Dorsolateral prefrontal cortex (tissue), 120 donors: ENCODE measurements at regions of chr7 and their contacts with region 1.

Region 1: DNA sequence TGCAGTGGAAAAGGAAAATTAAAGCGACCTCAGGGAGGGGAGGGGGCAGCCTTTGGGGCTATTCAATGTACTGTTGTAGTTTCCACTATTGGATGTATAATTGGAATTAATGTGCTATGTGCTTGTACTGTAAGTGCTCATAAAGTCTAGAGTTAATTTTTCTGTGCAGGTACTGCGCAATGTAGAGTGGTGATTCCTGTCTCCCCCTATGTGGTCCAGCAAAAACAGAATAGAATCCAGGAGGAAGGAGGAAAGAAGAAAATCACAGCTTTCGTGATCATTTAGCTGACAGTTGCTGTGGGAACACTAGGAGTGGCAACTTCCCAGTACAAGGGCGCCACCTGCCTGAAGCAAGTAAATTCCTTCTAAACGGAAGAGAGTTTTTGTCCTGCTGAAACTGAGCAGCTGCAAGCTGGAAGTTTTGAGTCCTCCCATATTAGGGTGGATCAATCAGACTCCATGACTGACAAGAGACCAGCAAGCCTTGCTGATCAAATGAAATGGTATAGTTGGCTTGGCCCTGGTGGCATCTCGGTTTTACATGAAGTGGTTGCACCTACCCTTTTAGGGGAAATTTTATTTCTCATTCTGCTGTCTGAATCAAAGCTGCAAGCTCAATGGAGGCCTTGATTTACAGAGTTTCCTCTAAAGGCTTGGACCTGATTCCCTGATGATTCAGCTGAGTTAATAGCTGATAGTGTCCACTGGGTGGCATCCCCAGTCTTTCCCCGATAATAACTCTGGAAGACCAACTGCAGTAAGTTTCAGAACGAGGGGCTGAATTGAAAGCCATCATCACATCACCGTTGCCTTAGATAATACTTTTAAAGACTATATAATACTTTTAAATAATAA is 299.8 kb downstream of the HGF start:
- DNase-seq: peak; percentile 35 to 78 (median 67)
- H3K4me3 ChIP-seq: peak overlapping the region in 2 of 59 donors; percentile 19 to 29
- H3K27ac ChIP-seq: no peak overlapping the region
- H3K27me3 ChIP-seq: peaks cover 0 to 5% (median 0%) of the 10 kb centered on the region in 45 donors
- CTCF ChIP-seq: peak; percentile 50 to 90 (median 74)

Region 2: GRCh38 chr7:80699045-80699638 is 771.0 kb before region 1 on chr7:
- intact Hi-C with region 1: loop called (anchors 5 kb)
- DNase-seq: no peak
- H3K4me3 ChIP-seq: no peak overlapping the region
- H3K27ac ChIP-seq: no peak overlapping the region
- H3K27me3 ChIP-seq: peaks cover 0 to 2% (median 0%) of the 10 kb centered on the region in 45 donors
- CTCF ChIP-seq: peak; percentile 58 to 98 (median 86)

Region 3: DNA sequence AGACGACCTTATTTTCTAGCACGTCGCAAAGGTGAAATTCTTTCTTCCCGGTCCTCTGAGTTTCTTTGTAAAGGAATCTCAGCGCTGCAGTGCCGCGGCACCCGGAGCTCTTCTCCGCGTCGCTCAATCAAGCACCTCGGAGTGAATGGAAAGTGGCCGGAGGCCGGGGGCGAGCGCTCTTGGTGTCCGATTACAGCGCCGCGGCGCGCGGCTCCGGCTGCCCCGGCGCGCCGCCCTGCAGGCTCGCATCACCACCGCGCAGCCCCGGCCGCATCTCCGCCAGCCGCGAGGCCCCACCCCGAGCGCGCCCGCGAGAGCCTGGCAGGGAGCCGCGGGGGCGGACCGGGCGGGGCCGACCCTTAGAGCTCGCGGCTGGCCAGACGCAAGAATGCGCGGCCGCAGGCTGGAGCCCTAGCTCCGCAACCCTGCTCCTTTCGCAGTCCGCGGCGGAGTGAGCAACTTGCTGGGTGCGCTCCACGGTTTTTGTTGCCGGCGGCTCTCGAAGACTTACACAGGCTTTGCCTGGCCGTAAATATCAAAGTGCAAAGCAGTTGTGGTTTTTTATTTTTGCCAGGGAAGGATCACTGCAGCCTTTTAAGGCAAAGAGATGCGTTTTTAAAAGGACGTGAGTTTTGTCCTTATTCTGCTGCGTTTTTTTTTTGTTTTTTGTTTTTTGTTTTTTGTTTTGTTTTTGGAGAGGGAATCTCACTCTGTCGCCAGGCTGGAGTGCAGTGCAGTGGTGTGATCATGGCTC is 551.0 kb before region 1 on chr7 and contains the start of gene SEMA3C:
- intact Hi-C with region 1: loop called in 1 of 2 experiments (anchors 10 kb)
- DNase-seq: peak; percentile 41 to 91 (median 80)
- H3K4me3 ChIP-seq: peak within 1 kb of the TSS; percentile 30 to 80 (median 67)
- H3K27ac ChIP-seq: peak within 1 kb of the TSS in 55 of 59 donors; percentile 6 to 89 (median 78)
- H3K27me3 ChIP-seq: peaks cover 0 to 9% (median 0%) of the 10 kb centered on the region in 45 donors
- CTCF ChIP-seq: peak in 28 of 56 donors; percentile 5 to 52 (median 29)
- total RNA-seq, gene SEMA3C: 7.3 to 40.9 (median 17.0) TPM

Region 4: DNA sequence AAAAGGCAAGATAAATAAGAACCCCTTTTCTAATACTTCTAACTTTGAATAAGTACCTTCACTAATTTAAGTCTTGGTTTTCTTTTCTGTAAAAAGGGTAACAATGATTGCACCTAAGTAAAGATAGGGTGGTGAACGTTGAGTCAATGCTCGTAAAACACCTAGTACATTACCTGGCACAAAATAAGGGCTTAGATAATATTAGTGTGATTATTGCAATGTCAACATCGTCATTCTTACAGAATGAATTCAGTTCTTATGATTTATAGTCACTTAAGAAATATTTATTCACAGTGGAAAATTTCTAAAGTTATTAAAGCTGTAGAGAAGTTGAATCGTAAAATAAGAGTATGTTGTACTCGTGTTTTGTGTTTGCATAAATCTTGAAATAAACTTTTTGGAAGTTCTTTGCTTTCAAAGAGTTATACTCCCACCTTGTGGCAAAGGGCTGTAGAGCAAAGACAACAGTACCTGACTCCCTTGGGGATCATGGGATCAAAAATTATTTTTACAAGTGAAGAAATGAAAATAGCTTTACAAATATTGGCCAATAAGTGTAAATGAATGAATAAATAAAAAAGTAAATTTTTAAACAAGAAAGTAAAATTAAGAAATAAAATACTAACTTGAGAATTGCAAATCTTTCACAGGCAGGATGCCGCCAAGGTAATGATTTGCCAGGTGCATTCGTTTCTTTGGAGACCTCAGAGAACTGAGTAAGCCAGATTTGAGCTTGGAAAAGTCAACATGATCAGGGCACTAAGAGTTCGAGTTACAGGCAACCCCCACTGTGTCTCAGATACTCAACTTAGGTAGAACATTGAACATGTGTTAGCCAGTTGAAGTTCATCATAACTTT is 1259.3 kb after region 1 on chr7:
- intact Hi-C with region 1: loop called in 1 of 2 experiments (anchors 10 kb)
- DNase-seq: no peak
- H3K4me3 ChIP-seq: no peak overlapping the region
- H3K27ac ChIP-seq: no peak overlapping the region
- H3K27me3 ChIP-seq: no peaks in the 10 kb centered on the region
- CTCF ChIP-seq: peak in 54 of 56 donors; percentile 17 to 64 (median 46)